HEK293 (cell line): ENCODE measurements at regions of chr11 and their contacts with region 1.

Region 1: DNA sequence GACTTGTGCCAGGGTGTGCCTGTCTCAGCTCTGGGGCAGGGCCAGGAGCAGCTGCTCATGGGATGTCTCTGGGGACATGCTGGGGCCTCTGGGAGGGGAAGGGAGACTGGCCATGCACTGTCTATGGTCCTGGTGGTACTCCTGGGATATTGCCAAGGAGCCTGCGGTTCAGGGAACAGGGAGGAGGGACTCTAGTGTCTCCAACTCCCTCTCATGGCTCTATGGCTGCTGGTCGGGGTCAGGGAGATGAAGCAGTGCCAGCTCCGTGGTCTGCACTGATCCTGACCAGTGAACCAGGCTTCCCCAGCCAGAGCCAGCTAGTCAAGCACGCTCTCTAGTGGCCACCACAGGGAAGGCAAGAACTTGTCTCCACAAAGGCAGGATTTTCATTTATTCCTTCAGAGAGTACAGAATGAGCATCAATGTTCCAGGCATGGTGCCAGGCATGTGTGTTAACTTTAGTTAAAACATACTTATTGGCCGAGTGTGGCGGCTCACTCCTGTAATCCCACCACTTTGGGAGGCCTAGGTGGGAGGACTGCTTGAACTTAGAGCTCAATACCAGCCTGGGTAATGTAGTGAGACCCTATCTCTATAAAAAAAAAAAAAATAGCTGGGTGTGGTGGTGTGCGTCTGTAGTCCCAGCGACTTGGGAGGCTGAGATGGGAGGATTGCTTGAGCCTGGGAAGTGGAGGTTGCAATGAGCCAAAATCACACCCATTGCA is 2.5 kb upstream of the BEST1 start:
- H3K4me3 ChIP-seq: no peak overlapping the region
- H3K27ac ChIP-seq: no peak overlapping the region
- H3K4me1 ChIP-seq: peaks cover 3% of the 10 kb centered on the region; the same call in 1 of the 2 replicates
- CTCF ChIP-seq: peak; percentile 77

Region 2: DNA sequence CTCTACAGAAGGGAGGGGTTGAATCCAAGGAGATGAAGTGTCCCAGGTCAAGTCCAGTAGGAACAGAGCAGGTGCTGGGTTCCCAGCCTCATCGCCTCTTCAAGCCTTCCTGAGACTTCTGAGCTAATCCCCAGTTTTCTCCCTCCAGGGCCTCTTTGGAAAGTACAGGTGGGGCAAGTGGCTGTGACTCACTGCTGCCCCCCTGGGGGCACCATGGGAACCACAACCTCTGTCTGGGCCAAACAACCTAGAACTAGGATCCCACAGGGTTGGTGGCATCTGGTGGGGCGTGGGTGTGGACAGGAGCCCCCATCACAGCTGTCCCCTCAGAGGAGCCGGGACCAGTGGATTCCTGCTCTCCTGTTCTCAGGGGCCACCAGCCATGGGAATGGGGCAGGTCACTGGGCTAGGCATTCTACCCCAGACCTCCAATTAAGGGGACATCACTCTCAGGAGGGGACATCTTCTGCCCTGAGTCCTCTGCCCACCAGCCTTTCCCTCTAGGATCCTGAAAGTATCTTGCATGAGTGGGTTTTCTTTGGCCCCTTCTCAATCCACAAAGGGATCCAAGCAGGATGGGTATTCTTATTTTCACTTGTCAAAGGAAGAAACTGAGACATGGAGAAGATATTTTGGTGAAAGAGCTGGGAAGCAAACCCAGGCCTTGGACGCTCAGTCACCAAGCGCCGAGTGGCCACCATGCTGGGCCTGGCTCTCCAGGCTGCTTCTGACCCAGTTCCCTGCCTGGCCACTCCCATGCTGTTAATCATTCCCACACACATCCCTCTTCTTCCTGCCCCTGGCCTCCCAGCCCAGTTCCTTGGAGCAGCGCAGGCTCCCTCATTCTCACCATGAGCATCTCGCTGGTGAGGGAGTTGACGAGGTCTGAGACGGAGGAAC is 415.3 kb before region 1 on chr11:
- CTCF ChIA-PET with region 1: no interaction called
- POLR2A ChIA-PET with region 1: no interaction called
- H3K4me3 ChIP-seq: no peak overlapping the region
- H3K27ac ChIP-seq: no peak overlapping the region
- H3K4me1 ChIP-seq: no peaks in the 10 kb centered on the region
- CTCF ChIP-seq: peak; percentile 45; the same call in 1 of the 2 replicates

Region 3: DNA sequence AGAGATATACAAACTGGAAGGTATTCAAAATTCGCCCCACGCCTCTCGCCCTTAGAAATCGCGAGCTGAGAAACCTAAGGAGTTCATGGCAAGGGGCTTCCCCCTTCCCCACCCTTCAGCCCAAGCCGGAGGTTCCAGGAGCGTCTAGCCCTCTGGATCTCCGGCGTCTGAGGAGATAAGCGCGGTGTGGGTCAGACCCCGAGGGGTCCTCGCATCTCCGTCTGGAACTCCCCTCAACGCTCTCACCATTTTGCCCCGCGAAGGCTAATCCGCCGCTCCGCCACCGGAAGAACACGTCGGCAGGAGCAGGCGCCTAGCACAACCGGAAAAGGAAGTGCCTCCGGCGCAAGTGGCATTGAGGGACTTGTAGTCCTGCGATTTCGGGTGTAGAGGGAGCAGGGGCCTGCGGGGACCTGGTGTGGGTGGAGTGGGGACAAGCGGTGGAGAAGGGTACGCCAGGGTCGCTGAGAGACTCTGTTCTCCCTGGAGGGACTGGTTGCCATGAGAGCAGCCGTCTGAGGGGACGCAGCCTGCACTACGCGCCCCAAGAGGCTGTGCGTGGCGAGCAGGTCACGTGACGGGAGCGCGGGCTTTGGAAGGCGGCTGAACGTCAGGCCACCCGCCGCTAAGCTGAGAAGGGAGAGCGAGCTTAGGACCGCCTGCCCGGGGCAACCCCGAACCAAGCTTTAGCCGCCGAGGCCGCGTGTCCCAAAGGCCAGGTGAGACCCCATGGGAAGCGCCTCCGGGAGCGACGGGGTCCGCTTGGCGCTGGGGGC is 155.2 kb before region 1 on chr11 and contains the starts of genes FEN1 and TMEM258:
- CTCF ChIA-PET with region 1: interaction called, 40 read pairs
- POLR2A ChIA-PET with region 1: interaction called, 3 read pairs
- H3K4me3 ChIP-seq: peak within 1 kb of the TSS; percentile 87
- H3K27ac ChIP-seq: peak within 1 kb of the TSS; percentile 89
- H3K4me1 ChIP-seq: 0 out of 2 replicates have a peak, but pooled peaks cover 1% of the 10 kb centered on the region
- CTCF ChIP-seq: no peak

Region 4: DNA sequence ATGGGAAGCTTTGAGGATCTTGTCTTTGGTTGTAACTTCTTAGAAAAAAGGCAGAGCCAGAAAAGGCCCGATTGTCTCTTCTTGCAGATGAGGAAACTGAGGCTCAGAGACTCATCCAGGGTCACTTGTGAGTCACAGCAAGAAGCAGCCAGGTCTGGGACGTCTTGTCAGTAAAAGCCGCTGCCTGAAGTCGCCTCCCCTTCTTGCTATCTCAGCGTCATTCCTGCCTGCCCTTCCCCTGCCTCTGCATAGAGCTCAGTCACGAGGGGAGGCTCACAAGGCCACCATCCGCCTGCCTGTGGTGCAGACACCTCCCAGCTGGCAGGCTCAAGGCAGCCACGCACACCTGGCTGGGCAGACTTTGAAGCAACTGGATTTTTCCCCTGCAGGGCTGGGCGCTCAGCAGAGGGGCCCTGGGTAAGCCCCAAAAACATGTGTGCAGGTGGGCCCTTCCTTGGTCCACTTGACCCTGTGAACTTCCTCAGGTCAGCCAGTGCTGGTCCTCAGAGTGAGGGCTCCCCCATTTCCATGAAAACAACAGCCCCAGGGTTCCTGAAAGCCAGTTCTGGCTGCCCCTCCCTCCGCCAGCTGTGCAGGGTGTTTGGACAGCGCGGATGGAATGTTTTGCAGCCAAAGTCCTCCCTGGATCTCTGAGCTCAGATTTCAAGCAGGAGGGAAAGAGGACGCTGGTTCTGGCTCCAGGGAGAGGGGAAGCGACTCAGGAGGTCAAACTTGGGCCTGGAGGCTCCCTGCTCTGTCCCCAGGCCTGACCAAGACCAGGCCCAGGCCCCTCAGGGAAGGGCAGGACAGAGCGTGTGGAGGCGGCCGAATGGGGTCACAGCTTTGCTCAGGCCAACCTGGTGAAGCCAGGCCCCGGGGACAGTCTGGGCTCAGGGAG is 24.2 kb before region 1 on chr11:
- CTCF ChIA-PET with region 1: interaction called, 14 read pairs
- POLR2A ChIA-PET with region 1: no interaction called
- H3K4me3 ChIP-seq: no peak overlapping the region
- H3K27ac ChIP-seq: no peak overlapping the region
- H3K4me1 ChIP-seq: no peaks in the 10 kb centered on the region
- CTCF ChIP-seq: no peak

Region 5: GRCh38 chr11:61967116-61967923 is 19.7 kb after region 1 on chr11 and contains the start of gene FTH1:
- CTCF ChIA-PET with region 1: interaction called, 18 read pairs
- POLR2A ChIA-PET with region 1: interaction called, 22 read pairs
- H3K4me3 ChIP-seq: peak within 1 kb of the TSS; percentile 82
- H3K27ac ChIP-seq: peak within 1 kb of the TSS; percentile 85
- H3K4me1 ChIP-seq: 0 out of 2 replicates have a peak, but pooled peaks cover 3% of the 10 kb centered on the region
- CTCF ChIP-seq: no peak

Region 6: GRCh38 chr11:62054484-62055121 is 107.0 kb after region 1 on chr11:
- CTCF ChIA-PET with region 1: interaction called, 20 read pairs
- POLR2A ChIA-PET with region 1: no interaction called
- H3K4me3 ChIP-seq: no peak overlapping the region
- H3K27ac ChIP-seq: no peak overlapping the region
- H3K4me1 ChIP-seq: no peaks in the 10 kb centered on the region
- CTCF ChIP-seq: peak; percentile 64